ENCODE measurements at regions of chr4 and their contacts with region 1.

Region 1: DNA sequence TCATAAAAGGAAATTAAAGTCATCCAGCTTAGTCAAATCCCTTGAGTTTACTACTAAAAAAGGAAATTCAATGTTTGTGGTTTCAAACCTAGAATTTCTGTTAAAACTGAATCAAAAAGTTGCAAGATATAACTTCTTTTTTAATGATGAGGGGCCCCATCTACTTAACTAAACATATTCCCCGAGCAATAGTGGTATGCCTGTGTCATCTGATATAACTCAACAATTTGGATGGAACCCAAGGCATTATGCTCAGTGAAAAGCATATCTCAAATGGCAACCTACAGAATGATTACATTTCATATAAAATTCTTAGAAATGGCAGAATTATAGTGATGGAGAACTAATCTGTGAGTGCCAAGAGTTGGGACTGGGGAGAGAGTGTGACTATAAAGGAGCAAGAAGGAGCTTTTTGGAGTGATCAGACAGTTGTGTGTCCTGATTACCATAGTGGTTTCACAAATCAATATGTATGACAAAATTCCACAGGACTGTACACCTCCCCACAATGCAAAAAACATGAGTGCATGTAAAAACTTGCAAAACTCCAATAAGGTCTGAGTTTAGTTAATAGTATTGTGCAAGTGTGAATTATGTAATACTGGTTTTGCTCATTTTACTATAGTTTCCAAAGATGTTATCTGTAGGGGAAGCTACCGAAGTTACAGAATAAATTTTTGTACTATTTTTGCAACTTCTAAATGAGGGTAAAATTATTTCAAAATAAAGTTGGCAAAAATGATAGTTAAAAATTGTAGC is 323.2 kb downstream of the ARHGAP24 start:
- DNase-seq: no peak
- ATAC-seq: no peak
- H3K4me3 ChIP-seq: no peak overlapping the region
- H3K27ac ChIP-seq: no peak overlapping the region
- H3K4me1 ChIP-seq: no peaks in the 10 kb centered on the region
- H3K27me3 ChIP-seq: no peaks in the 10 kb centered on the region
- CTCF ChIP-seq: no peak
- EP300 ChIP-seq: no peak
- POLR2A ChIP-seq: no peak
- RAD21 ChIP-seq: no peak

Region 2: DNA sequence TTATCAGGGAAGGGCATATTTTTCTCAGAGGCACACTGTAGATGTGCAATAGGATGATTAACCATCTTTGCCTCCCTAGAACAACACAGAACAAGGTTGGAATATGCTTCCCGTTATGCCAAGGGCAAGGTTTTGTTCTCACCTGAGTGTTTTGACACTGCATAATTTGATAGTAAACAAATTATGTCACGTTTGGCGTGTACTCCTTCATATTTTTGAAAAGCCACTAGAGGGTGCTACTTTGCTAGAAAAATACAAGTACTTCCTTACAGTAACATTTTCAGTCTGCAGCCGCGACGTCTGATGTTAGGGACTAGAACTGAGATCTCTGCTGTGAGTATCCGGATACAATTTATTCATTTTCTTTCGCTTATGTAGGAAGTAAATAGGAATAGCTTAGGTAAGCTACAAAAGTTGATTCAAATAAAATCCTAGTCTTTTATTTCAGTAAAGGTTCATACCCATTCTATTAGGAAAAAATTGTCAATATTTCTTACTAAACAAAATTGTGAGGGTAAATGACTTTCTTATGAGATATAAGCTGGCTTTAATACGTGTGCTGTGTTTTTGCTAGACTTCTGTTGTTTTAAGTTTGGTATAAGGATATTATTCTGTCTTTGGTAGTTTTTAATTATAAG is 650.6 kb before region 1 on chr4:
- CTCF ChIA-PET with region 1: interaction called, 3 read pairs
- POLR2A ChIA-PET with region 1: no interaction called
- RAD21 ChIA-PET with region 1: interaction called, 4 read pairs
- SMC1A ChIA-PET with region 1: interaction called, 3 read pairs
- in situ Hi-C with region 1: no loop called
- intact Hi-C with region 1: loop called (anchors 5 kb)
- DNase-seq: peak; percentile 11
- ATAC-seq: peak; percentile 93
- H3K4me3 ChIP-seq: no peak overlapping the region
- H3K27ac ChIP-seq: no peak overlapping the region
- H3K4me1 ChIP-seq: no peaks in the 10 kb centered on the region
- H3K27me3 ChIP-seq: no peaks in the 10 kb centered on the region
- CTCF ChIP-seq: peak; percentile 51 to 67 (median 53); a peak in 5 of 6 replicates
- EP300 ChIP-seq: no peak
- POLR2A ChIP-seq: no peak
- RAD21 ChIP-seq: peak; percentile 63

Region 3: GRCh38 chr4:85756938-85757337 is 41.3 kb before region 1 on chr4:
- CTCF ChIA-PET with region 1: interaction called, 22 read pairs
- POLR2A ChIA-PET with region 1: no interaction called
- RAD21 ChIA-PET with region 1: interaction called, 9 read pairs
- SMC1A ChIA-PET with region 1: interaction called, 11 read pairs
- in situ Hi-C with region 1: no loop called
- intact Hi-C with region 1: loop called (anchors 1 kb)
- DNase-seq: no peak
- ATAC-seq: peak; percentile 79
- H3K4me3 ChIP-seq: no peak overlapping the region
- H3K27ac ChIP-seq: no peak overlapping the region
- H3K4me1 ChIP-seq: no peaks in the 10 kb centered on the region
- H3K27me3 ChIP-seq: no peaks in the 10 kb centered on the region
- CTCF ChIP-seq: peak; percentile 49 to 60 (median 50); a peak in 5 of 6 replicates
- EP300 ChIP-seq: no peak
- POLR2A ChIP-seq: no peak
- RAD21 ChIP-seq: peak; percentile 71

Region 4: GRCh38 chr4:85761803-85762528 is 36.2 kb before region 1 on chr4:
- CTCF ChIA-PET with region 1: interaction called, 22 read pairs
- POLR2A ChIA-PET with region 1: no interaction called
- RAD21 ChIA-PET with region 1: interaction called, 9 read pairs
- SMC1A ChIA-PET with region 1: interaction called, 11 read pairs
- in situ Hi-C with region 1: no loop called
- intact Hi-C with region 1: loop called (anchors 1 kb)
- DNase-seq: no peak
- ATAC-seq: no peak
- H3K4me3 ChIP-seq: no peak overlapping the region
- H3K27ac ChIP-seq: no peak overlapping the region
- H3K4me1 ChIP-seq: no peaks in the 10 kb centered on the region
- H3K27me3 ChIP-seq: no peaks in the 10 kb centered on the region; a peak in 1 of 4 replicates
- CTCF ChIP-seq: no peak
- EP300 ChIP-seq: no peak
- POLR2A ChIP-seq: no peak
- RAD21 ChIP-seq: no peak

Region 5: DNA sequence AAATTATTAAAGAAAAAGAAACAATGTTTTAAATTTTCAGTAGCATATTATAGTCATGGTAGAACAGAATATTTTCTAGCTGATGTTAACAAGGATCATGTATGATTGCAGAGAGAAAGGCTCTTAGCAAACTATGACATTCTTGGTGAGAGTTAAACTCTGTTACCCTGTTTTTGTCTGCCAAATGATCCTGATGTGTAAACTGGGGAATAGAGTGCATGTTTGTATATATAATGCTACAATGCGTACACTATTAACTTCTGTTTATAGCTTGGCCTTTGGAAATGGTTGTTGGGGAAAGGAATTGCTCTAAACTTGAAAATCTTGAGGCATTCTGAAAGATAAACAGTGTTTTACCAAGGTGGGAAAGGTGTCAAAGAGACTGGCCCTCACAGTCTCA is 30.5 kb before region 1 on chr4:
- CTCF ChIA-PET with region 1: interaction called, 22 read pairs
- POLR2A ChIA-PET with region 1: no interaction called
- RAD21 ChIA-PET with region 1: interaction called, 3 read pairs
- SMC1A ChIA-PET with region 1: interaction called, 11 read pairs
- in situ Hi-C with region 1: no loop called
- intact Hi-C with region 1: no loop called
- DNase-seq: no peak
- ATAC-seq: no peak
- H3K4me3 ChIP-seq: no peak overlapping the region
- H3K27ac ChIP-seq: no peak overlapping the region
- H3K4me1 ChIP-seq: no peaks in the 10 kb centered on the region
- H3K27me3 ChIP-seq: no peaks in the 10 kb centered on the region; a peak in 1 of 4 replicates
- CTCF ChIP-seq: no peak
- EP300 ChIP-seq: no peak
- POLR2A ChIP-seq: no peak
- RAD21 ChIP-seq: no peak

Region 6: GRCh38 chr4:85778632-85779131 is 19.5 kb before region 1 on chr4:
- CTCF ChIA-PET with region 1: interaction called, 52 read pairs
- POLR2A ChIA-PET with region 1: no interaction called
- RAD21 ChIA-PET with region 1: interaction called, 12 read pairs
- SMC1A ChIA-PET with region 1: interaction called, 12 read pairs
- in situ Hi-C with region 1: no loop called
- intact Hi-C with region 1: no loop called
- DNase-seq: no peak
- ATAC-seq: peak; percentile 92
- H3K4me3 ChIP-seq: peak overlapping the region; percentile 9; the same call in 1 of the 2 replicates
- H3K27ac ChIP-seq: peak overlapping the region; percentile 29; the same call in 1 of the 2 replicates
- H3K4me1 ChIP-seq: peaks cover 4% of the 10 kb centered on the region; the same call in 1 of the 2 replicates
- H3K27me3 ChIP-seq: no peaks in the 10 kb centered on the region; a peak in 1 of 4 replicates
- CTCF ChIP-seq: no peak
- EP300 ChIP-seq: peak; percentile 52; a peak in 1 of 4 replicates
- POLR2A ChIP-seq: no peak
- RAD21 ChIP-seq: no peak

Measured in GM12878 (cell line).